ENCODE measurements at regions of chr9 and their contacts with region 1.

Region 1: GRCh38 chr9:14909961-14910805 is at the start of gene FREM1:
- DNase-seq: no peak
- H3K4me3 ChIP-seq: peak within 1 kb of the TSS; percentile 51 to 64
- H3K27ac ChIP-seq: peak within 1 kb of the TSS; percentile 57 to 71
- H3K4me1 ChIP-seq: peaks cover 0 to 30% of the 10 kb centered on the region in 2 donors
- H3K27me3 ChIP-seq: no peaks in the 10 kb centered on the region
- CTCF ChIP-seq: no peak
- total RNA-seq, gene FREM1: 0.85 TPM

Region 2: DNA sequence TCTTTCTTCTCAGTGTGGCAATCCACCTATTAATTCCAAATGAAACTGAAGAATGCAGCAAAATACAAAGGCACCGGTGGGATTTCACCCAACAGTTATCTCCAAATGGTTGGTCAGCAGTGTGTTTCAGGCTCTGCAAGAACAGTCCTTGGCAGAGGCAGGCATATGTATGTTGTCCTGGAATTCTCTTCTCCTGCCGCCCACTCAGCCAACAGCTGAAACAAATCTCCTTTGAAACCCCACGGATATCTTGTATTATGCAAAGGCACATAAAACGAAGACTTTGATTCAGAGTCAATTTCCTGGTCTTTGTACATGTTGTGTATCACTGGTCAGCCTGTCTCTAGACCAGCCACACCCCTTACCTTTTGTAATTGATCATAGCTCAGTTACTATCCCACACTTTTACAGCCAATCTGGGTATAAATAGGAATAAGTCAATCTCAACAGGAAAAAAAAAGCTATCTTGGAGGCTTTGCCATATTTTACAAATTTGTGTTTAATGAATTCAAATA is 29.2 kb before region 1 on chr9:
- intact Hi-C with region 1: loop called (anchors 2 kb)
- DNase-seq: no peak
- H3K4me3 ChIP-seq: no peak overlapping the region
- H3K27ac ChIP-seq: no peak overlapping the region
- H3K4me1 ChIP-seq: peaks cover 0 to 15% of the 10 kb centered on the region in 2 donors
- H3K27me3 ChIP-seq: no peaks in the 10 kb centered on the region
- CTCF ChIP-seq: no peak

Region 3: GRCh38 chr9:14993061-14993800 is 83.0 kb after region 1 on chr9:
- intact Hi-C with region 1: loop called (anchors 10 kb)
- DNase-seq: peak in 1 of 2 donors; percentile 91
- H3K4me3 ChIP-seq: peak overlapping the region; percentile 51 to 65
- H3K27ac ChIP-seq: no peak overlapping the region
- H3K4me1 ChIP-seq: no peaks in the 10 kb centered on the region
- H3K27me3 ChIP-seq: no peaks in the 10 kb centered on the region
- CTCF ChIP-seq: no peak

Region 4: DNA sequence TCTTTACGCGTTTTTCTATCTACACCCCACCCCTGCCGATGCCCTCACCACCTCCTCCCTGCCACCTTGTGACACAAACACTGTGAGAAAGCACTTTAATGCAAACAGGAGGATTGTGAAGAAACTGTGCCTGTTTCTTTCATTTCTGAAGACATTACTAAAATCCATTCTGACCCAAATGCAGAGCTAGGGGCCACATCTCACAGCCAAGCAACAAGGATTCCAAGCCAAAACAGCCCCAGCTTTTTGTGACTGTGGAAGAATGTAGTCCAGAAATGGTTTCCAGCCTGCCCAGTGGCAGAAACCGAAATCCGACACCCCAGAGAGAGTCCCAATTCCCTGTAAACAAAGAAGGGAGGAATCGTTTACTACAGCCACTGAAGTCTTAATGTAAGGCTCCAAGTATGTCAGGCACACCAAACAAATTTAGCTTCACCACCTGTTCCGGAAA is 206.0 kb after region 1 on chr9:
- intact Hi-C with region 1: no loop called
- DNase-seq: no peak
- H3K4me3 ChIP-seq: peak overlapping the region in 1 of 2 donors; percentile 18
- H3K27ac ChIP-seq: no peak overlapping the region
- H3K4me1 ChIP-seq: no peaks in the 10 kb centered on the region
- H3K27me3 ChIP-seq: no peaks in the 10 kb centered on the region
- CTCF ChIP-seq: no peak

Region 5: GRCh38 chr9:15142878-15143534 is 232.8 kb after region 1 on chr9:
- intact Hi-C with region 1: loop called (anchors 10 kb)
- DNase-seq: no peak
- H3K4me3 ChIP-seq: no peak overlapping the region
- H3K27ac ChIP-seq: no peak overlapping the region
- H3K4me1 ChIP-seq: no peaks in the 10 kb centered on the region
- H3K27me3 ChIP-seq: no peaks in the 10 kb centered on the region
- CTCF ChIP-seq: peak; percentile 22 to 81 (median 78)

Measured in ascending aorta (tissue), 2 donors.